ENCODE measurements at regions of chr14 and their contacts with region 1.

Region 1: DNA sequence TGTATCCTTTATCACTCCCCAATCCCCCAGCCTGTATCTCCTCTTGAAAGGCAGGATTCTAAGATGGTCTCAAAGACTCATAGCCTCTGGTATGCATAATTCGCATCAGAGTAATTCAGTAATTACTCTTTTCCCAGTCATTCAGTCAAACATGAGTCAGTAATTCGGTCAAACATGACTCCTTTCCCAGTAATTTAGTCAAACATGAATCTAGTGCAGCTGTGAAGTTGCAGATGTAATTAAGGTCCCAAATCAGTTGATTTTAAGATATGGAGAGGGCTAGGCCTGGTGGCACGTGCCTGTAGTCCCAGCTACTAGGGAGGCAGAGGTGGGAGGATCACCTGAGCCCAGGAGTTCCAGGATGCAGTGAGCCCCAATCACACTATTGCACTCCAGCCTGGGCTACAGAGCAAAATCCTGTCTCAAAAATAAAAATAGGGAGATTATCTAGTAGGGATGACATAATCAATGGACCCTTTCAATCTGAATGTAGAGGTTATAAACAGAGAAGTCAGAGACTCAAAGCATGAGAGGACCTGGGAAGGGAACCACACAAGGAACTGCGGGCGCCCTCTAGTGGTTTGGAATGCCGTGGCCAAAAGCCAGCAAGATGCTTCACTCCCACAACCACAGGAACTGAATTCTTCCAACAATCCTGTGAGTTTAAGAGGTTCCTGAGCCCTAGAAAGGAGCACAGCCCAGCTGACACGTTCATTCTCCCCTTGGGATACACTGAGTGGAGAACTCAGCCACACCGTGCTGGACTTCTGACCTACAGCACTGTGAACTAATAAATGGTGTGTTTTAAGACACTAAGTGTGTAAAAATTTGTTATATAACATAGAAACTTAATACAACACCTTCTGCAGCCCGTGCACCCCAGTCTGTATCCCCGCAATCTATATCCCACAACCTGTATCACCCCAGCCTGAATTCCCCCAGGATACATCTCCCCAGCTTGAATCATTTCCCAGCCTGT is 14.3 kb upstream of the ARMH4 start:
- DNase-seq: peak; percentile 75
- H3K4me3 ChIP-seq: no peak overlapping the region
- H3K27ac ChIP-seq: no peak overlapping the region
- H3K4me1 ChIP-seq: no peaks in the 10 kb centered on the region
- H3K27me3 ChIP-seq: no peaks in the 10 kb centered on the region
- CTCF ChIP-seq: peak; percentile 67 to 79 (median 70)
- POLR2A ChIP-seq: no peak

Region 2: GRCh38 chr14:57420986-57421385 is 745.3 kb before region 1 on chr14:
- intact Hi-C with region 1: no loop called
- DNase-seq: no peak
- H3K4me3 ChIP-seq: no peak overlapping the region
- H3K27ac ChIP-seq: no peak overlapping the region
- H3K4me1 ChIP-seq: no peaks in the 10 kb centered on the region
- H3K27me3 ChIP-seq: no peaks in the 10 kb centered on the region
- CTCF ChIP-seq: no peak
- POLR2A ChIP-seq: no peak

Region 3: GRCh38 chr14:58107947-58108552 is 58.2 kb before region 1 on chr14:
- intact Hi-C with region 1: loop called (anchors 2 kb)
- DNase-seq: peak; percentile 26
- H3K4me3 ChIP-seq: no peak overlapping the region
- H3K27ac ChIP-seq: no peak overlapping the region
- H3K4me1 ChIP-seq: no peaks in the 10 kb centered on the region
- H3K27me3 ChIP-seq: no peaks in the 10 kb centered on the region
- CTCF ChIP-seq: peak; percentile 56 to 75 (median 70)
- POLR2A ChIP-seq: no peak

Region 4: GRCh38 chr14:58118097-58118815 is 48.0 kb before region 1 on chr14:
- intact Hi-C with region 1: no loop called
- DNase-seq: no peak
- H3K4me3 ChIP-seq: no peak overlapping the region
- H3K27ac ChIP-seq: no peak overlapping the region
- H3K4me1 ChIP-seq: no peaks in the 10 kb centered on the region
- H3K27me3 ChIP-seq: no peaks in the 10 kb centered on the region
- CTCF ChIP-seq: no peak
- POLR2A ChIP-seq: no peak

Region 5: GRCh38 chr14:58467575-58467974 is 301.3 kb after region 1 on chr14:
- intact Hi-C with region 1: no loop called
- DNase-seq: no peak
- H3K4me3 ChIP-seq: no peak overlapping the region
- H3K27ac ChIP-seq: no peak overlapping the region
- H3K4me1 ChIP-seq: no peaks in the 10 kb centered on the region
- H3K27me3 ChIP-seq: no peaks in the 10 kb centered on the region
- CTCF ChIP-seq: no peak
- POLR2A ChIP-seq: no peak

Measured in prostate gland (tissue), 2 donors.